T-cell (primary cell): ENCODE measurements at regions of chr3 and their contacts with region 1.

Region 1: DNA sequence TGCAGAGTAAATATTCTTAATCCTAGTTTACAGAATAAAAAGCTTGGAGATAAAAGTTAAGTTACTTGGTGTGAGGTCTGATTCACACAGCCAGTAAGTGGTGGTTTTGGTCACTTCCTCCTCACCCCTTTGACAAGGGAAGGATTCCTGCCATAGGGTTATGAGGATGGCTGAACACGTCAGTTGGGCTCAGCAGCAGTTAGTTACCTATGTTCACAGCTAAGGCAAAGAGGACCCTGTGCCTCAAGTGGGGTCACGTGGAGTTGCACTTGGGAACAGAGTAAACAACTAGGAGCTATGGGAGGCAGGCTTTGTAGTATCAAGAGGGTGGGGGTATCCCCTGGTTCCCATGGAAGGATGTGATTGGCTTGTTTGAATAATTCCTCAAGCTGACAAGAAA is 232.2 kb downstream of the UBE2E2 start:
- DNase-seq: no peak
- ATAC-seq: no peak
- H3K4me3 ChIP-seq: no peak overlapping the region
- H3K4me3 Mint-ChIP-seq: no peak overlapping the region
- H3K27ac ChIP-seq: no peak overlapping the region
- H3K27ac Mint-ChIP-seq: no peak overlapping the region
- H3K4me1 ChIP-seq: peaks cover 5 to 6% of the 10 kb centered on the region in 2 experiments
- H3K4me1 Mint-ChIP-seq: peaks cover 24 to 35% (median 28%) of the 10 kb centered on the region in 3 donors
- H3K27me3 ChIP-seq: no peaks in the 10 kb centered on the region
- H3K27me3 Mint-ChIP-seq: peaks cover 0 to 2% of the 10 kb centered on the region in 2 donors

Region 2: GRCh38 chr3:22846566-22846965 is 588.8 kb before region 1 on chr3:
- CTCF ChIA-PET with region 1: no interaction called
- POLR2A ChIA-PET with region 1: no interaction called
- DNase-seq: no peak
- ATAC-seq: no peak
- H3K4me3 ChIP-seq: no peak overlapping the region
- H3K4me3 Mint-ChIP-seq: no peak overlapping the region
- H3K27ac ChIP-seq: no peak overlapping the region
- H3K27ac Mint-ChIP-seq: no peak overlapping the region
- H3K4me1 ChIP-seq: no peaks in the 10 kb centered on the region
- H3K4me1 Mint-ChIP-seq: no peaks in the 10 kb centered on the region
- H3K27me3 ChIP-seq: no peaks in the 10 kb centered on the region
- H3K27me3 Mint-ChIP-seq: no peaks in the 10 kb centered on the region

Region 3: GRCh38 chr3:23938688-23939087 is 503.4 kb after region 1 on chr3:
- CTCF ChIA-PET with region 1: interaction called in 1 of 2 experiments, 10 read pairs
- POLR2A ChIA-PET with region 1: no interaction called
- DNase-seq: no peak
- ATAC-seq: no peak
- H3K4me3 ChIP-seq: no peak overlapping the region
- H3K4me3 Mint-ChIP-seq: no peak overlapping the region
- H3K27ac ChIP-seq: no peak overlapping the region
- H3K27ac Mint-ChIP-seq: no peak overlapping the region
- H3K4me1 ChIP-seq: no peaks in the 10 kb centered on the region
- H3K4me1 Mint-ChIP-seq: peaks cover 0 to 5% (median 3%) of the 10 kb centered on the region in 3 donors
- H3K27me3 ChIP-seq: no peaks in the 10 kb centered on the region
- H3K27me3 Mint-ChIP-seq: peaks cover 0 to 4% of the 10 kb centered on the region in 2 donors